Activated CD4-positive, alpha-beta T cell treated with anti-CD3 and anti-CD28 coated beads, Interleukin-2, amount 10 ng/mL, durations not matched to agents 7 days and 5 days (primary cell): ENCODE measurements at regions of chr15 and their contacts with region 1.

Region 1: GRCh38 chr15:40108855-40109735 is at the start of gene BMF:
- DNase-seq: peak; percentile 97
- H3K4me3 Mint-ChIP-seq: peak within 1 kb of the TSS; percentile 90
- H3K27ac Mint-ChIP-seq: peak within 1 kb of the TSS; percentile 84
- H3K4me1 Mint-ChIP-seq: peaks cover 50% of the 10 kb centered on the region
- H3K27me3 Mint-ChIP-seq: peaks cover 17% of the 10 kb centered on the region
- total RNA-seq, gene BMF: 8.5 to 8.6 TPM

Region 2: GRCh38 chr15:40044717-40045571 is 64.2 kb before region 1 on chr15:
- CTCF ChIA-PET with region 1: interaction called, 15 read pairs
- POLR2A ChIA-PET with region 1: interaction called, 3 read pairs
- DNase-seq: peak; percentile 84
- H3K4me3 Mint-ChIP-seq: no peak overlapping the region
- H3K27ac Mint-ChIP-seq: peak overlapping the region; percentile 72
- H3K4me1 Mint-ChIP-seq: peaks cover 73% of the 10 kb centered on the region
- H3K27me3 Mint-ChIP-seq: no peaks in the 10 kb centered on the region

Region 3: DNA sequence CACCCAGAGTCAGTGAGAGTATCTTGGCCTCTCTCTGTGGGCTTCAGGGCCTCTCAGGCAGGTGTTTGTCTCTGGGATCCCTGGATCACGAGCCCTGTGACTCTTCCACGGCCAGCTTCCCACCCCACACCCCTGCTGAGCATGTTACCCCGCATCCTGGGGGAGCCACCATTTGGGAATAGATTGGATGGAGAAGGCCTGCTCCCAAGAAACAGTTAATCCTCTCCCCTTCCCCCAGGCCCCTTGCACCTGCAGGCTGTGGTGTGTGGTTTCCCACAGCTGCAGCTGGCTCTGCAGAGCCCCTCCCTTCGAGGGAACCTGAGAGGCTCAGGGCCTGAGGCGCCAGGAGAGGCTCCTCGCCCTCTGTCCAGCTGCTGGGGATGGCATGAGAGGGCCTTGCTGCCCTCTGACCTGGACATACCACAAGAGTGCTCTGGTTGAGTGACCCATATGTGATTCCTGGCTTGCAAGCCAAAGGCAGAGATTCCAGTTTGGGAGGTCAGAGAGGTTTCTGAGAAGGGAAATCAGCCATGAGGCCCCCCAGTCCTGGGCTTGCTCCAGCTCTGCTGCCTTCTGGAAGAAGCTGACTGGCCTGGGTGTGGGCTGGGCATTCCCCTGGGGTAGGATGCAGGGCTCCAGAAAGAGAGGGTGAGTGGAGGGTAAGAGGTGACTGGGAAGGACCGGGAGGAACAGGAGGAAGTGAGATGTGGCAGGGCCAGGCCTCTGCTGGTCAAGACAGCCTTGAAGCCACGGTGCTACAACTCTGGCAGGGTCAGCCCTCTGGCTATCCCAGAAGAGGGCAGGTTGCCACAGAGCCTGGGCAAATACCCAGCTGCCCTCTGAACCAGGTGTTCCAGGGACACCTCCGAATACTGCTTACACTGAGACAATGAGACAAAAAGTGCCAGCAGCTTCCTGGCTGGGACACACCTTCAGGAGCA is 54.2 kb before region 1 on chr15:
- CTCF ChIA-PET with region 1: interaction called, 10 read pairs
- POLR2A ChIA-PET with region 1: no interaction called
- DNase-seq: peak; percentile 65
- H3K4me3 Mint-ChIP-seq: peak overlapping the region; percentile 49
- H3K27ac Mint-ChIP-seq: peak overlapping the region; percentile 91
- H3K4me1 Mint-ChIP-seq: peaks cover 68% of the 10 kb centered on the region
- H3K27me3 Mint-ChIP-seq: no peaks in the 10 kb centered on the region